Activated CD4-positive, alpha-beta T cell treated with anti-CD3 and anti-CD28 coated beads for 36 hours (primary cell): ENCODE measurements at regions of chr7 and their contacts with region 1.

Region 1: DNA sequence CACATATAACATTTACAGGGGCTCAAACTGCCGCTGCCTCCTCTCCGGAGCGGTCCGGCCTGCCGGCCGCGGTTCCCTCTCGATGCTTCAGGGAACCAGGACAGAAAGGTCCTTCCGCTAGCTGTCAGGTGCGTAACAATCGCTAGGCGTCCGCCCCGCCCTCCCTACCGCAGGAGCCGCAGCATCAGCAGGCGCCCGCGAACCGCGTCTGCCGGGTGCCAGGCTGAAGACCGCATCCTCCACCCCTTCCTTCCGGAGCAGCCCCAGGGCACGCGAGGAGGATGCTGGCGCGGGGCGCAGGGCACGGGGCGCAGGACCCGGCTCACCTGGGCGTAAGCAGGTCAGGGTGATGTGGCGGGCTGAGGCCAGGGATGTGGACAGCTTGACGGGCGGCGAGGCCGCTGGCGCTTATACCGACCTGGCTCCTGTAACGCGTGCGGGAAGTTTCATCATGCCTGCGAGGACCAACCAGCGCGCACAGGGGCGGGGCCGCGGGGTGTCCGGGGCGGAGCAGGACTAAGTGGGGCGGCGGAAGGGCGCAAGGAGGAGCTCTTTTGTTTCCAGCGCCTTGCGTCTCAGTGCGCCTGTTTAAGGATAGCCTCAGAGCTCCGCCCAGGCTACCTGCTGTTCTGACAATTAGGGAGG is at the start of gene ASNS:
- DNase-seq: peak; percentile 96
- ATAC-seq: peak; percentile 96
- H3K4me3 Mint-ChIP-seq: peak within 1 kb of the TSS; percentile 92
- H3K27ac Mint-ChIP-seq: peak within 1 kb of the TSS; percentile 82
- H3K4me1 Mint-ChIP-seq: peaks cover 20% of the 10 kb centered on the region
- H3K27me3 Mint-ChIP-seq: no peaks in the 10 kb centered on the region
- total RNA-seq, gene ASNS: 228 to 247 TPM

Region 2: GRCh38 chr7:97117372-97118188 is 754.6 kb before region 1 on chr7 and contains the start of gene SDHAF3:
- CTCF ChIA-PET with region 1: no interaction called
- POLR2A ChIA-PET with region 1: interaction called, 3 read pairs
- intact Hi-C with region 1: loop called (anchors 1 to 5 kb)
- DNase-seq: peak; percentile 99
- ATAC-seq: peak; percentile 95
- H3K4me3 Mint-ChIP-seq: peak within 1 kb of the TSS; percentile 82
- H3K27ac Mint-ChIP-seq: peak within 1 kb of the TSS; percentile 95
- H3K4me1 Mint-ChIP-seq: peaks cover 38% of the 10 kb centered on the region
- H3K27me3 Mint-ChIP-seq: no peaks in the 10 kb centered on the region
- total RNA-seq, gene SDHAF3: 30.2 to 44.3 TPM

Region 3: GRCh38 chr7:97971990-97972943 is 100.1 kb after region 1 on chr7:
- CTCF ChIA-PET with region 1: no interaction called
- POLR2A ChIA-PET with region 1: no interaction called
- intact Hi-C with region 1: loop called (anchors 1 to 5 kb)
- DNase-seq: peak; percentile 93
- ATAC-seq: peak; percentile 97
- H3K4me3 Mint-ChIP-seq: peak overlapping the region; percentile 98
- H3K27ac Mint-ChIP-seq: peak overlapping the region; percentile 97
- H3K4me1 Mint-ChIP-seq: peaks cover 19% of the 10 kb centered on the region
- H3K27me3 Mint-ChIP-seq: no peaks in the 10 kb centered on the region

Region 4: GRCh38 chr7:98878365-98879165 is 1006.4 kb after region 1 on chr7 and contains the start of gene TRRAP:
- CTCF ChIA-PET with region 1: no interaction called
- POLR2A ChIA-PET with region 1: no interaction called
- intact Hi-C with region 1: loop called in 1 of 2 experiments (anchors 5 kb)
- DNase-seq: peak; percentile 88
- ATAC-seq: peak; percentile 67
- H3K4me3 Mint-ChIP-seq: peak within 1 kb of the TSS; percentile 91
- H3K27ac Mint-ChIP-seq: peak within 1 kb of the TSS; percentile 96
- H3K4me1 Mint-ChIP-seq: peaks cover 30% of the 10 kb centered on the region
- H3K27me3 Mint-ChIP-seq: no peaks in the 10 kb centered on the region
- total RNA-seq, gene TRRAP: 51.7 to 54.0 TPM